Heart right ventricle (tissue), 16 donors: ENCODE measurements at regions of chr2 and their contacts with region 1.

Region 1: DNA sequence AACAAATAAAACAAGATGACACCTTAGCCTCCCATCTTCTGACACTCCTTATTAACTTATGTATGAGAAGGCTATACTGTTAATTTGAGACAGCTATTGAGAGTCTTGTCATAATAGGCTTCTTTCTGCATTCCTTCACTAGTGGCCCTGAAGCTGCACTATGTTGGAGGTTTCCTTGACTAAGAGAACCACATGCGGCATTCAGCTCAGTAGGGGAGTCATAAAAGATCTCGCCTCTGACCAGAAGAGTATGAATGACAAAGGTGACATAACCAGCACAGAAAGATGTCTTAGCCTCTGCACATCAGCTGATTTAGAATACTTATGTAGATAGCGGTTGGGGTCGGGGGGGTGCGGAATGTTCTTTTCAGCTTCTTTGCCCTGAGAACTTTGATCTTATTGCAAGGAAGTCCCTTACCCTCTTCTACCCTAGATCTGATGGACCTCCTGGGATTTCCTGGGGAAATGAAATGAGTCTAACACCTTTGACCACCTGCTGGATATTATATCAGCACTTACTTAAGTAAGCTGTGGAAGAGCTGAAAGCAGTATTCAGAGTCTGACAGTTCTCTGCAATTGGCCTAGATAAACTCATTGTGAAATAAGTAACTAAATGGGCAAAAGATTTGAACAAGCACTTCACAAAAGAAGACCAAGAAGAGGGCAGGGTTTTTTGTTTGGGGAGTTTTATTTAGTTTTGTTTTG is 24.2 kb downstream of the RBM45 start:
- DNase-seq: no peak
- ATAC-seq: no peak
- H3K4me3 ChIP-seq: no peak overlapping the region
- H3K27ac ChIP-seq: no peak overlapping the region
- H3K4me1 ChIP-seq: no peaks in the 10 kb centered on the region
- H3K27me3 ChIP-seq: no peaks in the 10 kb centered on the region
- CTCF ChIP-seq: no peak

Region 2: DNA sequence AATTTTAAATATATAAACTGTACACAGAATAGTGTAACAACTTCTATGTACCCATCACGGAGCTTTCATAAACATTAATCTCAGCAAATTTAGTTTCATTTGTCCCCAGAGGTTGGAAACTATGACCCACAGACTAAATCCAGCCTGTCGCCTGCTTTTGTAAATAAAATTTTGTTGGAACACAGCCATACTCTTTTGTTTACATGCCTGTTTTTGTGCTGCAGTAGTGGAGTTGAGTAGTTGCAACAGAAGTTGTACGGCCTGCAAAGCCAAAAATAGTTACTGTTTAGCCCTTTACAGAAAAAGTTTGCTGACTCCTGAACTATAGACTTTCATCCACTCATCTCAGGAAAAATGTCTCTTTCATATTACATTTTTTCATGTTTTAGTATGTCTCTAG is 15.6 kb after region 1 on chr2:
- intact Hi-C with region 1: no loop called
- DNase-seq: peak in 1 of 2 donors; percentile 8
- ATAC-seq: peak in 7 of 8 donors; percentile 47 to 81 (median 56)
- H3K4me3 ChIP-seq: no peak overlapping the region
- H3K27ac ChIP-seq: no peak overlapping the region
- H3K4me1 ChIP-seq: no peaks in the 10 kb centered on the region
- H3K27me3 ChIP-seq: peaks cover 0 to 14% (median 6%) of the 10 kb centered on the region in 7 donors
- CTCF ChIP-seq: no peak

Region 3: DNA sequence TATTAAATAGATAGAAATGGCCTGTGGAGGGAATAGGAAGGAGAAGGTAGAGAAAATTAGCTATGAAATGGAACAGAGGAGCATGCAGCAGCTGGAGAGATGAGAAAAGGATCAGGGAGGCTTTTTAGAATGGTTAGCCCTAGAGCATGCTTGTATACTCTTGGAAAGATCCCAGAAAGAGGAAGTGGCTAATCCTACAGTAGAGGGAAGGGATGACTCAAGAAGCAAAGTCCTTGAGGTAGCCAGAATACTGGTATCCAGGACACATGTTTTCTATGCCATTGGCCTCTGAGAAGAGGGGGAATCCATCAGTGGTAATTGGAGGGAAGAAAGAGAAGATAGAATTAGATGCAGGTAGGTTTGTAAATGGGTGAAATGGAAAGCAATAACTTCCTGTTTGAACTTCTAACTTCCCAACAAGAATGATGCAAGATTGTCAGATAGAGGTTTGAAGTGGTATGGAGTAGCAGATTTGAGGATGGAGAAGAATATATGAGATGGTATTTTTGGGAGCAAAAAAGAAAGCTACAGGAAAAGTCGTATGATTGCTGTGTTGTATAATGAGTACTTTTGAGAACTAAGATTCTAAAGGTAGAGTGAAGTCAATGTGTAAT is 40.7 kb after region 1 on chr2:
- intact Hi-C with region 1: no loop called
- DNase-seq: no peak
- ATAC-seq: no peak
- H3K4me3 ChIP-seq: no peak overlapping the region
- H3K27ac ChIP-seq: no peak overlapping the region
- H3K4me1 ChIP-seq: no peaks in the 10 kb centered on the region
- H3K27me3 ChIP-seq: peaks cover 0 to 20% (median 0%) of the 10 kb centered on the region in 7 donors
- CTCF ChIP-seq: no peak

Region 4: DNA sequence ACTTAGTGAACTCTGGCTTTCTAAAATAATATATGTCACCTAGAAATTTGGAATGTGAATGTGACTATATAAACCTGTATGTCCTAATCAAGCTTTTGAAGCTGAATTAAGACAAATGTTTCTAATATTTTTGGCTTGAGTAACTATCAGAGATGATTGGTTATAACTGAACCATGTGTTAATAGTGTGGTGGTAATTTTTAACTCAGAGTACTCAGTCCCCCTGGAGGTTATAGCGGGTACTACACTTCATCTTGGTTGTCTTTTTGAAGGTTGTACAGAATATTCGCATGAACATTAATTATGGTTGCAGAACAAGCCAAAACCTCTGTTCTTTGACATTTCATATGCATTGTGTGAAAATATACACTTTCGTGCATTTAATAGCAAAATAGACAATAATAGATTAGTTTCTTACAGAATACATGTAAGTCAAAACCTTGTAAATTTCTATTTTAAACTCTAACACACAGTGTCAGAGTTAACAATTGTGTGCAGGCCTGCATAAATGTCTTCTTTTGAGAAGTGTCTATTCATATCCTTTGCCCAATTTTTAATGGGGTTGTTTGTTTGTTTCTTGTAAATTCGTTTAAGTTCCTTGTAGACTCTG is 143.9 kb after region 1 on chr2:
- intact Hi-C with region 1: loop called in 8 of 10 experiments (anchors 1 to 10 kb)
- DNase-seq: peak in 1 of 2 donors; percentile 51
- ATAC-seq: peak in 6 of 8 donors; percentile 34 to 77 (median 58)
- H3K4me3 ChIP-seq: no peak overlapping the region
- H3K27ac ChIP-seq: no peak overlapping the region
- H3K4me1 ChIP-seq: peaks cover 0 to 20% (median 0%) of the 10 kb centered on the region in 9 donors
- H3K27me3 ChIP-seq: no peaks in the 10 kb centered on the region
- CTCF ChIP-seq: peak; percentile 73 to 86 (median 80)